Activated T-helper 2 cell treated with anti-CD3 and anti-CD28 coated beads, Interferon-gamma antibody, Interleukin-2, Interleukin-4, amounts not matched to agents 10 μg/mL and 5 μg/mL and 100 μg/mL, durations not matched to agents 14 hours and 24 hours and 36 hours (primary cell): ENCODE measurements at regions of chr2 and their contacts with region 1.

Region 1: DNA sequence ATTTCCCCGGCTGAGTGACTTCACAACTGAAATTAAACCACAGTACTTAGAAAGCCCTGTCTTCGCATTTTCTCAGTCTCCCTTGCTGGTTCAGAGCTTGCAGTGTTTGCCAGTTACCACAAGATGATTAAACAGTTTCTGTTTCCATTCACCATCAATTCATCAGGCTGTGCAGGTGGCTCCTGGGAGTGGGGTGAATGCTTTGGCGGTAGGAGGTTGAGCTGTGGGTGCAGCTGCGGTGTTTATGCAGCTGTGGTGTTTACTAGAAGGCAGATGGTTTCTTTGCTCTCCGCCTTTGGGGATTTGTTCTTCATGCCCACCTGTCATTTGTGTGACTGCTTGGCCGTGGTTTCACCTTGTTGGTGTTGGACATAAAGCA is 16.1 kb downstream of the ACOXL start:
- DNase-seq: peak; percentile 81
- H3K4me3 Mint-ChIP-seq: peak overlapping the region; percentile 67
- H3K27ac Mint-ChIP-seq: peak overlapping the region; percentile 52
- H3K4me1 Mint-ChIP-seq: peaks cover 55% of the 10 kb centered on the region
- H3K27me3 Mint-ChIP-seq: peaks cover 15% of the 10 kb centered on the region

Region 2: GRCh38 chr2:110149330-110150220 is 598.9 kb before region 1 on chr2:
- intact Hi-C with region 1: loop called (anchors 1 kb)
- DNase-seq: no peak
- H3K4me3 Mint-ChIP-seq: no peak overlapping the region
- H3K27ac Mint-ChIP-seq: peak overlapping the region; percentile 61
- H3K4me1 Mint-ChIP-seq: peaks cover 52% of the 10 kb centered on the region
- H3K27me3 Mint-ChIP-seq: peaks cover 4% of the 10 kb centered on the region

Region 3: DNA sequence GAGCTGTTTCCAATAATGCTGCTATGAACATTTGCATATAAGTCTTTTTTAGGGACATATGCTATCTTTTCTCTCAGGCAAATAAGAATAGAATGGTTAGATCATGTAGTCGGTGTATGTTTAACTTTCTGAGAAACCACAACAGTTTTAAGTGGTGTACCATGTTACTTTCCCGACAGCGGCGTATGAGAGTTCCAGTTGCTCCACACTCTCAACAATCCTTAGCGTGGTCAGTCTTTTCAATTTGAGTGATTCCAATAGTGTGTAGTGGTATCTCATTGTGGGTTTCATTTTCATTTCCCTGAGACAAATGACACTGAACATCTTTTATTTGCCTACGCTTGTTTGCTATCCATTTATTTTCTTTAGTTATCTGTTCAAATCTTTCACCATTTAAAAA is 133.4 kb after region 1 on chr2:
- intact Hi-C with region 1: loop called (anchors 5 kb)
- DNase-seq: no peak
- H3K4me3 Mint-ChIP-seq: no peak overlapping the region
- H3K27ac Mint-ChIP-seq: no peak overlapping the region
- H3K4me1 Mint-ChIP-seq: peaks cover 13% of the 10 kb centered on the region
- H3K27me3 Mint-ChIP-seq: peaks cover 46% of the 10 kb centered on the region